BJ (cell line): ENCODE measurements at regions of chr6 and their contacts with region 1.

Region 1: GRCh38 chr6:39309942-39310531 is 4.2 kb downstream of the KCNK17 start:
- DNase-seq: no peak
- H3K4me3 ChIP-seq: no peak overlapping the region
- H3K27me3 ChIP-seq: peaks cover 20% of the 10 kb centered on the region
- CTCF ChIP-seq: peak; percentile 88

Region 2: DNA sequence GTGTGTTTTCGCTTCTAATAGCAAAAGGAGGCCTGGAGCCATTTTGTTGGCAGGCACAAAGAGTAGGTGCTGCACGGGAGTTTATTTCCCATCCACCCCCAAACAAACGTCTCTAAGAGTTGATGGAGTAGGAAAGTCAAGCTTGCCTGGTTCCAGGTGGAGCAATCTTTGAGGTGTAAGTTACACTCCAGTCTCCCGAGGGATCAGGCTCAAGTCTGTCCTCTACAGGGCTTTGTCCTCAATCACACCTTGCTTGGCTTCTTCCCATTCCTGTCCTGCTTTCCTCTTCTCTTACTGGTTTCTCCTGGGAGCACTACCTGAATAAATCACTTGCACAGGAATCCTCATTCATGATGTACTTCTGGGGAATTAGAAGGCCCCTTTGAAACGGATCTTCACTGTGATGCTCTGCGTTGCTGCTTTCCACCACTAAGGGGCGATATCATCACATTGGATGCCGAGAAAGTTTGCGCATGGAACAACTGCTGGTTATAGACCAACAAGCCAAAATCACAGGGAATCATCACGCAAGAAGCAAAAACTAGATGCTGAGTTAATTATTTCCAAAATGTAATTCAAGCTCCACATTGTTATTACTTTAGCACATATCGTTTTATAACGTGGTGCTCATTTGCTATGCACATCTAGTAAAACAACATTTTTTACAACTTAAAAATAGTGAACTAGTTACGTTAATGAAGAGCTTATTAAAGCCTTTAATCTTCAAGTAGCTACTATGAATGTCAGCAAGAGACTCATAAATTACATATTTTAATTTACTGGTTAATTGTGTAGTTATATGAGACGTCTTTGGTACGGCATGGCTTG is 438.1 kb before region 1 on chr6:
- CTCF ChIA-PET with region 1: interaction called, 49 read pairs
- POLR2A ChIA-PET with region 1: no interaction called
- DNase-seq: peak; percentile 4
- H3K4me3 ChIP-seq: no peak overlapping the region
- H3K27me3 ChIP-seq: no peaks in the 10 kb centered on the region; the same call in 1 of the 2 replicates
- CTCF ChIP-seq: peak; percentile 95

Region 3: DNA sequence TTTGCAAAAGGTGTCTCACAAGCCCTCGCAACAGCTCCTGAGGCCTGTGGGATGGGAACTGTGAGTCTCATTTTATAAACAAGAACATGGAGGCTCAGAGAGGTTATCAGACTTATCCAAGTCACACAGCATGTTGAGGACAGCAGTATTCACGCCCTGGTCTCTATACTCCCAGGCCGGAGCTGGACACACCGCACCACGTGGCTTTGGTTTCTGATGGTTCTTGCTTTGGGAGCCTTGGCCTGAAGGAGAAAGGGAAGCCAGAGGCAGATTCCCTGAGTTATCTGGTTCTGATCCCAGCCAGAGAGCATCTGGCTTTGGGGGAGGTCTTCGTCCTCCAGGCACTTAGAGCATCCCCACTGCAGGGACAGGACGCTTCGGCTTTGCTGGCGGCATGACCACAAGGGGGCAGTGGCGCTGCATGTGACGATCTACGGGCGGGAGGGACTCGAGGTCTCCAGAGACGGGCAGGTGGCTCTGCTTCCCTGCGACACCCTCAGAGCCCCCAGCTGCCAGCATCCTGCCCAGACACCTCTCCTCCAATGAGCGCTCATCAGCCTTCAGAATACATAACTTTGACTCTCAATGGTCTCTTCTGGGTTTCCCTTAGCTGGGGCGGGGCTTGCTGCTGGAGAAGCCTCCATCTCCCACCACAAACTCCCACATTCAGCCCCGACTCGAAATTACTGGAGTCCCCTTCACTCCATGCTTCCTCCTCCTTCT is 143.7 kb before region 1 on chr6:
- CTCF ChIA-PET with region 1: interaction called, 136 read pairs
- POLR2A ChIA-PET with region 1: no interaction called
- DNase-seq: no peak
- H3K4me3 ChIP-seq: no peak overlapping the region
- H3K27me3 ChIP-seq: no peaks in the 10 kb centered on the region; the same call in 1 of the 2 replicates
- CTCF ChIP-seq: peak; percentile 86

Region 4: GRCh38 chr6:39327507-39327906 is 17.5 kb after region 1 on chr6:
- CTCF ChIA-PET with region 1: no interaction called
- POLR2A ChIA-PET with region 1: no interaction called
- DNase-seq: no peak
- H3K4me3 ChIP-seq: no peak overlapping the region
- H3K27me3 ChIP-seq: peaks cover 5% of the 10 kb centered on the region; the same call in 1 of the 2 replicates
- CTCF ChIP-seq: no peak